ENCODE measurements at regions of chr9 and their contacts with region 1.

Region 1: DNA sequence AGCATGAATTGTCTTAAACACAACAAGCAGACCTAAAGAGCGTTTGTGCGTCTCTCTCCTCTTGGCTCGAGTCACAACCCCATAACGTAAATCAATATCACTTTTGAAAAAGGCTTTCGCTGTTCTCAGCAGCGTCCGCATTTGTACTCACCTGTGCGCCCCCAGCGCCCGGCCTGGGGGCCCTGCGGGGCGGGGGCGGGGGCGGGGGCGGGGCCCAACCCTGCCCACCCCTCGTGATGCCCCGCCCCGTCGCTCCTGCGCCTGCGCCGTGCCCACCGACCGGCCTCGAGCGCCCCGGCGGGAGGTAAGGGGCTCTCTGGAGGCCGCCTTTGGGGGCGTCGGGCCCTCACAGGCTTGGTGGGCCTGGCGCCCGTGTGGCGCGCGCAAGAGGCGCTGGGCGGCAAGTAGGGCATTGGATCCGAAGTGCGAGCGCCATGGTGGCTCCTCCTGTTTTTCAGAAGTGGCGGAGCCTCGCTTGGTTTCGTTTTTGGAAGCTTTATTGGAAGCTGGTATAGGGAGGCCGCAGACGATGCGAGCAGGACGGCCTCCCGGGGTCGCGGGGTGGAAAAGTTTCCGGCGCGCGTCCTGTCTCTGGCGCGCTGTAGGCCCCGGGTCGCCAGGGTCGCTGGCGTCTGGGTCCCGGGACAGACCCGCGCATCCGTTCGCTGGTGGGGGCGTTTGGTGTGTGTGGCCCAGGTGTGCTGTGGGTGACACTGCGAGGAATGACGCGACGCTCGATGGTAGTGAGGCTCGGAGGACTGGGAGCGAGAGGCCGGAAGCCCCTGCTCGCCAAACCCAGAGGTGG is at the start of gene STX17:
- DNase-seq: peak; percentile 82
- H3K4me3 Mint-ChIP-seq: peak within 1 kb of the TSS; percentile 96
- H3K27ac Mint-ChIP-seq: peak within 1 kb of the TSS; percentile 95
- H3K4me1 Mint-ChIP-seq: peaks cover 20% of the 10 kb centered on the region
- H3K27me3 Mint-ChIP-seq: peaks cover 3% of the 10 kb centered on the region
- total RNA-seq, gene STX17: 30.6 to 36.1 TPM

Region 2: GRCh38 chr9:99259231-99259918 is 647.2 kb before region 1 on chr9:
- CTCF ChIA-PET with region 1: no interaction called
- POLR2A ChIA-PET with region 1: no interaction called
- intact Hi-C with region 1: loop called (anchors 10 kb)
- DNase-seq: peak; percentile 71
- H3K4me3 Mint-ChIP-seq: peak overlapping the region; percentile 36
- H3K27ac Mint-ChIP-seq: no peak overlapping the region
- H3K4me1 Mint-ChIP-seq: peaks cover 27% of the 10 kb centered on the region
- H3K27me3 Mint-ChIP-seq: peaks cover 8% of the 10 kb centered on the region

Region 3: DNA sequence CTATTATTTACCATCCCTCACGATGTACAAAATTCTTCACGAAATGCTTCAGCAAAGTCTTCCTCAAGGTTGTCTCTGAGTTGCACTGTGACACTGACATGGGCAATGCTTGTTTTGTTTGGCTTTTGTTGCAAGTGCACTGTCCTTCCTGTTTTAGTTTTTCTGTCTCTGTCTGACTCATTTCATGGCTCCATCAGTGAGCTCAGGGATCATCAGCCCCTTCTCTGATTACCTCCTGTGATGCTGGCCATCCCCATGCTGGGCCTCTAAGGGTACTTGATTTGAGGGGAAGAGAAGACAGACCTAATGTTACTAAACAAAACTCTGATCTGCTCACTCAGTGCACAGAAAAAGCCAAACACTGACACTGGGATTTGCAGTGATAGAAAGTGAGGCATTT is 37.8 kb before region 1 on chr9:
- CTCF ChIA-PET with region 1: no interaction called
- POLR2A ChIA-PET with region 1: no interaction called
- intact Hi-C with region 1: loop called (anchors 5 kb)
- DNase-seq: no peak
- H3K4me3 Mint-ChIP-seq: no peak overlapping the region
- H3K27ac Mint-ChIP-seq: no peak overlapping the region
- H3K4me1 Mint-ChIP-seq: peaks cover 21% of the 10 kb centered on the region
- H3K27me3 Mint-ChIP-seq: no peaks in the 10 kb centered on the region

Region 4: GRCh38 chr9:99954819-99955218 is 48.2 kb after region 1 on chr9:
- CTCF ChIA-PET with region 1: no interaction called
- POLR2A ChIA-PET with region 1: interaction called, 3 read pairs
- intact Hi-C with region 1: loop called (anchors 2 kb)
- DNase-seq: no peak
- H3K4me3 Mint-ChIP-seq: no peak overlapping the region
- H3K27ac Mint-ChIP-seq: peak overlapping the region; percentile 62
- H3K4me1 Mint-ChIP-seq: peaks cover 22% of the 10 kb centered on the region
- H3K27me3 Mint-ChIP-seq: no peaks in the 10 kb centered on the region

Measured in activated CD4-positive, alpha-beta memory T cell treated with anti-CD3 and anti-CD28 coated beads for 36 hours (primary cell).